ENCODE measurements at regions of chr12 and their contacts with region 1.

Region 1: GRCh38 chr12:116662612-116663144 is 75.2 kb downstream of the SPRING1 start:
- DNase-seq: peak; percentile 52
- ATAC-seq: peak; percentile 81
- H3K4me3 ChIP-seq: peak overlapping the region; percentile 50 to 71 (median 57)
- H3K27ac ChIP-seq: no peak overlapping the region
- H3K4me1 ChIP-seq: peaks cover 48% of the 10 kb centered on the region
- H3K27me3 ChIP-seq: 0 out of 5 replicates have a peak, but pooled peaks cover 0 to 9% of the 10 kb centered on the region in 2 experiments
- CTCF ChIP-seq: peak; percentile 29; the same call in 1 of the 2 replicates
- EP300 ChIP-seq: peak in 1 of 2 experiments; percentile 45; a peak in 1 of 4 replicates
- POLR2A ChIP-seq: no peak
- RAD21 ChIP-seq: peak; percentile 27; the same call in 1 of the 2 replicates

Region 2: DNA sequence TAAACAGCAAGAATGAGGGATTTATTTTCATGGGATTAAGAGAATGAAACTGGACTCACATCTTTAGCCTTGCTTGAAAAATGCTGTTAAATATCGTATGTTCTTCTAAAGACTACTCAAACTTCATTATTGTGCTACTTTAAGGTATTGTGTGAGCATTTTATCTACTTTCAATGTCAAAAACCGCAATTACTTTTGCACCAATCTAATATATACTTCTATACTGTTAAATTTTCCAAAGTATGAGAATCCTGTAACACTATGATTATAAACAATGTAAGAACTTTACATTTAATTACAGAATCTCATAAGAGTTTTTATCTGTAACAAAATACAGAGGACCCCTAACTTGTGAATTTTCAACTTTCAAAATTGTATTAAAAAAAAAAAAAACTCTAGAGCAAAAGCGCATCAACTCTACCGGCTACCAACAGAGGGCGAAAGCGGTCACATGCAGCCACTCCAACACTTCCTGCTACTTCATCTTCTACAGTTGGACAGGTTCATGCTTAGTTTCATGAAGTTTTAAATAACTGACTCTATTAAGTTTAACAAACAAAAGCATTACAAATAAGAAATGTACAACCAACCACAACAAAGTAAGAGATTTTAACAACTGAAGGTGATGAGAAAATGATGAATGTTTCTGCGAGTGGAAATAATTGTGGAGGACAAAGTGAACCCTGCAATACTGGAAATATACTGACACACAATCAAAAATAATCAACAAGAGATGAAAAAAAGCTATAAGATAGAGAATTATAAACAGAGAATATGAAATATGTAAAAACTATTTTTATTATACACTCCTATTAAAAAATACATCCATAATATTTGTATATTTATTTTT is 596.1 kb before region 1 on chr12:
- CTCF ChIA-PET with region 1: no interaction called
- POLR2A ChIA-PET with region 1: no interaction called
- in situ Hi-C with region 1: no loop called
- intact Hi-C with region 1: no loop called
- DNase-seq: peak; percentile 34
- ATAC-seq: no peak; the same call in 2 of the 3 replicates
- H3K4me3 ChIP-seq: no peak overlapping the region
- H3K27ac ChIP-seq: no peak overlapping the region
- H3K4me1 ChIP-seq: peaks cover 14% of the 10 kb centered on the region
- H3K27me3 ChIP-seq: no peaks in the 10 kb centered on the region
- CTCF ChIP-seq: peak; percentile 63
- EP300 ChIP-seq: no peak
- POLR2A ChIP-seq: no peak
- RAD21 ChIP-seq: peak; percentile 21; the same call in 1 of the 2 replicates

Region 3: DNA sequence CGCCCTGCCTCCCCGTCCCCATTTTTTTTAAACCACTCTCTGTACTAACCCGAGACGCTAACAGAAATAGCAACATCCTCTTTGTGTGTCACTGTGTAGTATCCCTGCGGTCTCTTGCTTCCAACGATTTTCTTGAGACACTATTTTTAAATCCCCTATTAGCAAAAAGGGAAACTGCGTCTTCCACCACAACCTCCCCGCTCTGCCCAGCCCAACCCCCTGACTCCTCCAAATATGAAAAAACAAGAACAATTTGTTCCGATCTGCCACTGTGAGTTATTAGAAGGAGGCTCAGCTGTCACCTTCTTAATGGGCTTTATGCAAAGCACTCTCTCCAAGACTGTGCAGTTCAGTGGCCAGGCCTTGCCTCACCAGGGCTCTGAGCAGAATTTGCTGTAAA is 27.2 kb before region 1 on chr12:
- CTCF ChIA-PET with region 1: no interaction called
- POLR2A ChIA-PET with region 1: interaction called, 10 read pairs
- in situ Hi-C with region 1: no loop called
- intact Hi-C with region 1: no loop called
- DNase-seq: no peak
- ATAC-seq: peak; percentile 27
- H3K4me3 ChIP-seq: no peak overlapping the region
- H3K27ac ChIP-seq: no peak overlapping the region
- H3K4me1 ChIP-seq: peaks cover 52% of the 10 kb centered on the region
- H3K27me3 ChIP-seq: peaks cover 1 to 30% of the 10 kb centered on the region in 2 experiments; a peak in 3 of 5 replicates
- CTCF ChIP-seq: no peak
- EP300 ChIP-seq: no peak
- POLR2A ChIP-seq: no peak
- RAD21 ChIP-seq: no peak